Right ventricle myocardium inferior (tissue), 1 donor: ENCODE measurements at regions of chr11 and their contacts with region 1.

Region 1: DNA sequence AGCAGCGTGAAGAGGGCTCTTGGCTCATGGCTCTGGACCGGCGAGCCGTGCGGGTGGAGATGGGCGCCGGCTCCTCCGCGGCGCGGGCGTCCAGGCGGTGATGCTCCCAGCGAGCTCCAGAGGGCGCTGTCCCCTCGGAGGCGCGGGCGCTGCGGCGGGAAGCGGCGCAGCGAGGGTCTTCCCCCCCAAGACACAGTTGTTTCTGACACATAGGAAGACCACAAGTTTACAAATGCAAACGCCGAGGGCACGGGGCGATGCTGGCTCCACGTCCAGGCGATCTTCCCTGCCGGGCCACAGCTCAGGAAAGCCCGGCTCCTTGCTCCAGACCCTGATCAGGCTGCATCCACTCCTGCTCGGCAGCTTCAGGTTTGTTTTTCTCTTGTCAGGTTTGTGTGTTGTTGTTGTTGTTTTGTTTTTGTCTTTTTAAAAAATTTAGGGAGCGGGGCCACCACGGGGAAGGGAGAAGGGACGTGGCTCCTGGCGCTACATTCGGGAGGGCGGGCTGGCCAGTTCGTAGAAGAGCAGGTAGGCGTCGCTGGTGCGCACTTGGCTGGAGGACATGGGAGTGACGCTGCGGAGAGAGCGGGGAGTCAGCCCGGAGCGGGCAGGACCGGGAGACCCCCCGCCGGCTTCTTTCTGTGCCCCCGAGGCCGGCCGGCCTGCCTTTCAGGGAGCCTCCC is 10.0 kb upstream of the MFRP start:
- DNase-seq: peak; percentile 91
- ATAC-seq: peak; percentile 75

Region 2: DNA sequence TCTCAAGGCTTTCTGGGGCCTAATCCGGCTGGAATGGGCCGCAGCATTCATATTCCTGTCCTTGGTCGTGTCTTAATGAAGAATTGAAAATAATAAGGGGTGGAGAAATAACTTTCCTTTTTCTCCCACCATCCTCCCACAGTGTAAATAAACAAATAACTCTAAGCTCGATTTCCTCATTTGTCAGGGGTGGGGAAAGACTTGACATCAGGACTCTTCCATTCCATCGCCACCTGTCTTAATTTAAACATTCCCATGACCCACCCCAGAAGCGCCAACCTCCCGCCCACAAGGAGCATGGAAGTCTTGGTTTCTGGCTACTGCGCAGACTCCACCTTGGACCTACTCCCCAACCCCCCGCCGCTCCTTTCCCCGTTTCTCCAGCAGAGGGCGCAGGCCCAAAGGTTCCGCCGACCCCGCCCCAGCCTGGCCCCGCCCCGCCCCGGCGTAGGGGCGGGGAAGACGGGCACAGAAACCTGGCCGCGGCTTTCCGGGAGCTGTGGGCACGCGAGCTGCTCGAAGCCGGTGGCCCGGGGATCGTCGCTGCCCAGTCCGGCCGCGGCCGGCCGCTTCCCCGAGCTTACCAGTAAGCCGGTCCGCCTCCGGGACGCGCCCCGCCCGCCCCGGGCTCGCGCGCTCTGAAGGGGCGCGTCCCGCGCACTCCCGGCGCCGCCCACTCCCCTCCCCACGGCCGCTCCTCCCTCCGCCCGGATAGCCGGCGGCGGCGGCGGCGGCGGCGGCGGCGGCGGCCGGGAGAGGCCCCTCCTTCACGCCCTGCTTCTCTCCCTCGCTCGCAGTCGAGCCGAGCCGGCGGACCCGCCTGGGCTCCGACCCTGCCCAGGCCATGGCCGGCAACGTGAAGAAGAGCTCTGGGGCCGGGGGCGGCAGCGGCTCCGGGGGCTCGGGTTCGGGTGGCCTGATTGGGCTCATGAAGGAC is 150.6 kb before region 1 on chr11 and contains the start of gene CBL:
- intact Hi-C with region 1: no loop called
- DNase-seq: peak; percentile 95
- ATAC-seq: peak; percentile 98
- total RNA-seq, gene CBL: 7.1 TPM

Region 3: DNA sequence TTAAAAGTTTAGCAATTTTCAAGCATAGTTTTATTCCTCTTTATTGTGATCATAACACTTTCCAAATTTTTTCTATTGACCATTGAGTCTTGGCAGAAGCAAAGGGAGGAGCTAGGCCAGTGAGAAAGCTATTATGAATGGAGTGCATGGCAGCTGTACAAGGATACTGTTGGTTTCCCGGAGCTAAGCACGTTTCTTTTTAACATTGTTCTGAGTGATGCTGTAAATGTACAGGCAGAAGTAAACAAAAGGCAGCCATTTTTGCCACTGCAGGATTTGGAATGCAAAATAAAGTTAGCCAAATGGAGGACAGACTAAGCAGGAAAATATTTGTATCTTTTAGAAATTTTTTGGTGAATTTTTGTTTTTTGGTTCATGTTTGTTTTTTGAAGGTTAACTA is 134.2 kb before region 1 on chr11:
- intact Hi-C with region 1: no loop called
- DNase-seq: no peak
- ATAC-seq: no peak

Region 4: DNA sequence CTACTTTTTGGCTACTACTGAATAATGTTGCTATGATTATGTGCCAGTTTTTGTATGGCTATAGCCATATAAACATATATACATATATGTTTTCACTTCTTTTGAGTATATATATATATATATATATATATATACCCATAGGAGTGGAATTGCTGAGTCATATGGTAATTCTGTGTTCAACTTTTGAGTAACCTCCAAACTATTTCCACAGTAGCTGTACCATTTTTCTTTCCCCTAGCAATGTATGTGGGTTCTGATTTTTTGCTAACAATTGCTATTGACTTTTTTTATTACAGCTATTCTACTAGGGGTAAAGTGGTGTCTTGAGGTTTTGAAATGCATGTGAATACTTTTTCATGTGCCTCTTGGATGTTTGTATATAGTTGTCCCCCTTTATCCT is 120.0 kb before region 1 on chr11:
- intact Hi-C with region 1: no loop called
- DNase-seq: no peak
- ATAC-seq: no peak

Region 5: DNA sequence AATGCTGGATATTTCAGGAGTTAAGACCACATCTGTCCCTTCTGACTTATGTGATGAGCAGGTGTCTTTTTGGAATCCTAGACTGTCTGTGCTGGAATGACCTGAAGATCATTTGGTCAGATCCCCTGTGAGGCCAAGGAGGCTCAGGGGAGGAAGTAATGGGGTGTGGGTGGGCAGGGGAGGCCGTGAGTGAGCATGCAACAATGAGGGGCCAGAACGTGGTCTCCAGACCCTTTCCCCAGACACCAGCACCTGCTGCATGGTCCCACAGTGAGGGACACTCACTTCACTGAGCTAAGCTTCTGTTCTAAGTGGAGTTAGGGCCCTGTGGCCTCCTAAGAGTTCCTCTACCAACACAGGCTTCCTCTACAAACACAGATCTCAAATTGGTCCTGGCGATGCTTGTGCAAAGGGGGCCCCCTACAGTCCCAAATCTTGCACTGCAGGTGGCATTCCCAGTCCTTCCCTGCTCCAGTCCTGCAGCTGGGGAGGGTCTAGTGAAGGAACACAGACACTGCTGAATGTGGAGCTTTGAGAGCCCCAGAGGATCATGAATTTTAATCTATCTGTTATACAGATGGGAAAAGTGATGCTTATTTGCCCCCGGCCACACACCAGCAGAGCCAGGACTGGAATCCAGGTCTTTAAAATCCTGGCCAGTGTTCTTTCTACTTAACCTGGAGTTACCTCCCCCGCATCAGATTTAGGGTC is 17.6 kb after region 1 on chr11:
- intact Hi-C with region 1: loop called (anchors 1 kb)
- DNase-seq: peak; percentile 69
- ATAC-seq: no peak

Region 6: GRCh38 chr11:119384332-119384731 is 27.8 kb after region 1 on chr11:
- intact Hi-C with region 1: no loop called
- DNase-seq: no peak
- ATAC-seq: no peak

Region 7: DNA sequence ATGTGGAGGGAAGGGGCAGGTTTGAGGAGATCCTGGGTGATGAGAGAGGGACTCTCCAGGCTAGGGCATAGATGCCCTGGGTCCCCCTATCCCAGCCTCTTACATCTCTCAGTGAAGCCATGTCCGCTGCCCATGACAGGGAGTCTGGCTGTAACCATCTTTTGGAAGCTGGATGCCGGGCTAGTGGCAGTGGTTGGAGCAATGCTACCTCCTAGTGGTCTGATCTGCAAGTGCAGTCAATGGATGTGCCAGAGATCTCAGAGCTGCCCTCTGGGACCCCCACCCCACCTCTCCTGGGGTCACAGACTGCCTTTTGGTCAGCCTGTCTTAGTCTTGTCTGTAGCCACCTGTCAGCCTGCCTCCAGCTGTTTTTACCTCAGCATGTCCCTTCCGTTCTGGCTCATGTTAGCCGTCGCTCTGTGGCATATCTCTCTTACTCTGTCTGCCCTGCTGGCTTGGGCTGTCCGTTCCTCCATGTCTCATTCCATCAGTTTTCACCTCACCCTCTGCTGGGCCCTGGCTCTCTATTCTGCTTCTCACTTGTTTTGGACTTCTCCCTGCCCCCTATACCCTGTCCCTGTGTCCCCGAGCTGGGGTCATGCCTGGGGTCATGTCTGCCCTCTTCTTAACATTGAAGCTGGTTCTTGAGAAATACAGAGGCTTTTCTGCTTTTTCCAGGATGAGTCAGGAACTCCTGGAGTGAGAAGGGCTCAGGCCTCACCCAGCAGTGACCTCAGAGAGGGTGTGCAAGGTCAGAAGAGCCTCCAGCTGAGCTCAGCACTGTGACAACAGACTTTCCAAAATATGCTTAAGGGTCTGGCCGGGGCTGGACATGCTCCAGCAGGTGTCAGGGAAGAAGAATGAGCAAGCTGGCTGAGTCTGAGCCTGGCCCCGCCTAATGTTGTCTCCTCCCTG is 118.4 kb after region 1 on chr11:
- intact Hi-C with region 1: loop called (anchors 2 kb)
- DNase-seq: no peak
- ATAC-seq: peak; percentile 57